Panc1 (cell line): ENCODE measurements at regions of chr5 and their contacts with region 1.

Region 1: DNA sequence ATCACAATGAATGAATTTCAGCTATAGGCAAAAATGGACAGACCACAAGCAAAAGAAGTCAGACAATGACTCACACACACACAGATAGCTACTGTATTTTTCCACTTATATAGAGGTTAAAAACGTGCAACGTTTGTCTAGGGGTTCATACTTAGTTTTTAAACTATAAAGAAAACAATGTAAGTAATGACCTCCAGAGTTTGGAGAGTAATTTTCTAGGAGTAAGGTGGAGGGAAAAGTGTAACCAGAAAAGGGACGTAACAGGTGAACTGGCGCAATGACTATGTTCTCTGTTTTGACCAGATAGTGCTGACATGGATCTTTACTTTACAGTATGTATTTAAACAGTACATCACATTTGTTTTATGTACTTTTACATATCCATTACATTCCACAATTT is 51.1 kb downstream of the FNIP1 start:
- DNase-seq: no peak
- ATAC-seq: no peak
- H3K4me3 ChIP-seq: no peak overlapping the region
- H3K27ac ChIP-seq: no peak overlapping the region
- H3K4me1 ChIP-seq: no peaks in the 10 kb centered on the region
- H3K27me3 ChIP-seq: no peaks in the 10 kb centered on the region
- CTCF ChIP-seq: no peak

Region 2: GRCh38 chr5:132462926-132463745 is 717.4 kb after region 1 on chr5:
- CTCF ChIA-PET with region 1: no interaction called
- POLR2A ChIA-PET with region 1: interaction called, 14 read pairs
- in situ Hi-C with region 1: no loop called
- intact Hi-C with region 1: no loop called
- DNase-seq: no peak
- ATAC-seq: no peak
- H3K4me3 ChIP-seq: no peak overlapping the region
- H3K27ac ChIP-seq: no peak overlapping the region; the same call in 1 of the 2 replicates
- H3K4me1 ChIP-seq: peaks cover 18% of the 10 kb centered on the region
- H3K27me3 ChIP-seq: no peaks in the 10 kb centered on the region
- CTCF ChIP-seq: no peak